Ascending aorta (tissue), 2 donors: ENCODE measurements at regions of chr3 and their contacts with region 1.

Region 1: DNA sequence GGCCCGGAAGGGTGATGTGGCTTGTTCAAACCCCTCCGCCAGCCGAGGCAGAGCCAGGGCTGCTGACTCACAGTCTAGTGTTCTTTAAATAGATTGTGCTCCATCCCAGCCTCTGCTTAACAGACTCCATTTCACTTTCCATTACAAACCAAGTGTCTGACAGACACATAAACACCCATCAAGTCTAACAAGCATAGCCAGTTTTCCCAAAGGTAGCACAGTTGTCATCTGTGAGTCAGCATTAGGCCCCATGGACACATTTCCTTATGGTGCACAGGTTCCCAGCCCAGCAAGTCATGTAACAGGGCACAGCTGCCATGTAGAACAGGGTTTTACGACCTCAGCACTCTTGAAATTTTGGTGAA is 109.9 kb upstream of the RAP2B start:
- DNase-seq: peak in 1 of 2 donors; percentile 81
- H3K4me3 ChIP-seq: no peak overlapping the region
- H3K27ac ChIP-seq: peak overlapping the region; percentile 61 to 72
- H3K4me1 ChIP-seq: peaks cover 0 to 8% of the 10 kb centered on the region in 2 donors
- H3K27me3 ChIP-seq: no peaks in the 10 kb centered on the region
- CTCF ChIP-seq: no peak

Region 2: DNA sequence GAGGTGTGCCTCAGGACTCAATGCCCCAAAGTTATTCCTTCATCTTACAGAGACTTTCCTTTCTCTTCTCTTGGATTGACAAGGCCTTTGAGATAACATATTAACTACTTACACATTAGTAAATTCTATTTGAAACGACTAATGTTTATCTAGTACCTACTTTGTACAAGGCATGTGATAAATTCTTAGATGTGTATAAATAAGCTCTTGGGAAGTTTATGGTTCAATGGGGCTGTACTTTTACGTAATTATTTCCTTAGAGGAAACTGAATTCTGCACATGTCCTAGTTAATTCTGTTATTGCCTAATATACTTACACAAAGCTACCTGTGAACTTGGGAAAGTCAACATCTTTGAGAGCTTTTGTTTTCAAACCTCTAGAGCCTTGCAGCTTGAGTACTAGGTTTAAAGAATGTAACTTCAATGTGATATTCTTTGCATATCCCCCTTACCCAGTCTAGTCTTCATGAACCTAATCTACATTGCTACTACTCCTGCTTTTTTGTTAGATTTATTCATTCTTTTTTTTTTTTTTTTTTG is 51.4 kb after region 1 on chr3:
- intact Hi-C with region 1: no loop called
- DNase-seq: no peak
- H3K4me3 ChIP-seq: no peak overlapping the region
- H3K27ac ChIP-seq: no peak overlapping the region
- H3K4me1 ChIP-seq: no peaks in the 10 kb centered on the region
- H3K27me3 ChIP-seq: no peaks in the 10 kb centered on the region
- CTCF ChIP-seq: no peak

Region 3: GRCh38 chr3:153138276-153139210 is 86.5 kb after region 1 on chr3:
- intact Hi-C with region 1: loop called (anchors 5 kb)
- DNase-seq: peak; percentile 53 to 89
- H3K4me3 ChIP-seq: no peak overlapping the region
- H3K27ac ChIP-seq: peak overlapping the region; percentile 57 to 70
- H3K4me1 ChIP-seq: peaks cover 0 to 7% of the 10 kb centered on the region in 2 donors
- H3K27me3 ChIP-seq: no peaks in the 10 kb centered on the region
- CTCF ChIP-seq: no peak